Heart right ventricle (tissue), 16 donors: ENCODE measurements at regions of chr7 and their contacts with region 1.

Region 1: GRCh38 chr7:73851410-73852234 is 9.3 kb upstream of the METTL27 start:
- DNase-seq: no peak
- ATAC-seq: peak; percentile 30 to 79 (median 71)
- H3K4me3 ChIP-seq: no peak overlapping the region
- H3K27ac ChIP-seq: peak overlapping the region in 9 of 10 donors; percentile 38 to 81 (median 51)
- H3K4me1 ChIP-seq: peaks cover 0 to 32% (median 13%) of the 10 kb centered on the region in 9 donors
- H3K27me3 ChIP-seq: peaks cover 0 to 25% (median 16%) of the 10 kb centered on the region in 7 donors
- CTCF ChIP-seq: no peak

Region 2: DNA sequence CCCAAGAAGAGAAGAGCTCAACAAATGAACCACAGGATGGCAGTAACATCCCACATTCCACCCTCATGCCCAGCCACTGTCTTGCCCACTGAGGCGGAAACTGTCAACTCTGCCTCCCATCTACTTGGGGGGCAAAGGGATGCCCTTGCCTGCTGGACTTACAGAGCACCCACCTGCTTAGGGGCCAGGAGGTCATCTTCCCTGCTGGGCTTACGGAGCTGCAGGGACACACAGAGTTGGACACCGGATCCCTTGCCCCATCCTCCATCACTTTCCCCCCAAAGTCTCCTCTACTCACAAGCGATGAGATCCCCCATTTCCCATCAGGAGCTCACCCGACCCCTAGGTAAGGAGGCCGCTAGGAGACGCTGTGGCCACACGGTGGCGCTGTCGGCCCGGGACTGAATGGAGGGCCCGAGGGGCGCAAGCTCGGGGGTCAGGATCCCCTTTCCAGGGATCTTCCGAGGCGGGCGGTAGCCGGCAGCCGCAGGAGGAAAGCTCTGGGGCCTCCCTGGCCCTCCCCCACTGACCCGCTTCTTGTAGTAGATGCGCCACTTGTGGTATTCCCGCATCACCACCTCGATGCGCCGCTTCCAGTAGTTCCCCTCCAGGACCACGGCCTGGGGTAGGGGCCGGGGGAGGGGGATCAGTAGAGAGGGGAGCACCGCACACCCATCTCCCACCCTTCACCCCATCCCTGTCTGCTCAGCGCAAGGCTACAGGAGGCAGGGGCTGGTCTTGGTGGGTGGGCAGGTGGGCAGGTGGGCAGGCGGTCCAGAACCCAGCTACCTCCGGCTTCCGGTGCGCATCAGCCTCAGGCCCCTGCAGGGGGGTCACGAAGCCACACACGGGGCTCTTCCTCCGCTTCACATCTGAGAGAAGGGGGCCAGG is 244.6 kb before region 1 on chr7:
- intact Hi-C with region 1: loop called in 7 of 10 experiments (anchors 5 to 10 kb)
- DNase-seq: peak; percentile 32 to 65
- ATAC-seq: peak; percentile 61 to 85 (median 74)
- H3K4me3 ChIP-seq: no peak overlapping the region
- H3K27ac ChIP-seq: no peak overlapping the region
- H3K4me1 ChIP-seq: peaks cover 0 to 7% (median 0%) of the 10 kb centered on the region in 9 donors
- H3K27me3 ChIP-seq: peaks cover 5 to 63% (median 47%) of the 10 kb centered on the region in 7 donors
- CTCF ChIP-seq: peak; percentile 89 to 98 (median 93)

Region 3: DNA sequence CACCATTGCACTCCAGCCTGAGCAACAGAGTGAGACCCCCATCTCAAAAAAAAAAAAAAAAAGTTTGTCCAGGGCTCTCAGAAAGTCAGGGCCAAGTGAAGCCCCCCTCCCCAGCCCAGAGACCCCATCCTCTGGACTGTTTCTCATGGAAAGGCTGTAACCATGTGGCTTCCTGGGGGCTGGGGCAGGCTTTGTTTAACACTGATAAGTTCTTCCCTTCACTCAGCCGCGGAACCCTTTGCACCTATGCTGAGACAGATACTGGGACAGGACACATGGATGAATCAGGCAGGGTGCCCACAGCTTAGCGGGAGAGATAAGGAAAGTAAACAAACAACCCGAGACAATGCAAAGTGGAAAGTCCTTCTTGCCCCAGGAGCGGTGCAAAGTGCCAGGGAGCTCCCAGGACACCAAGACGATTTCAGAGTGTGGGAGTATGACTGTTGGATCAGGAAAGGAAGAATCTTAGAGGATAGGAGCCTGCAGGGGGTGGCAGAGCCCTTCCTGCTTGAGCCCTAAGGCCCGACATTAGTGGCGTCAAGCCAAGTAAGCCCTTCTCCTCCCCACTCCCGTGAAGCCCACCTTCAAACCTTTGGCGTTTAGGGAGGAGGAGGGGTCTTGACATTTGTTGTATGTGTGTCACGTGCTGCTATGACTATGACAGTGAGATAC is 238.9 kb before region 1 on chr7:
- intact Hi-C with region 1: loop called in 7 of 10 experiments (anchors 5 to 10 kb)
- DNase-seq: no peak
- ATAC-seq: peak in 2 of 8 donors; percentile 18 to 40
- H3K4me3 ChIP-seq: no peak overlapping the region
- H3K27ac ChIP-seq: no peak overlapping the region
- H3K4me1 ChIP-seq: peaks cover 0 to 3% (median 0%) of the 10 kb centered on the region in 9 donors
- H3K27me3 ChIP-seq: peaks cover 0 to 52% (median 26%) of the 10 kb centered on the region in 7 donors
- CTCF ChIP-seq: no peak

Region 4: DNA sequence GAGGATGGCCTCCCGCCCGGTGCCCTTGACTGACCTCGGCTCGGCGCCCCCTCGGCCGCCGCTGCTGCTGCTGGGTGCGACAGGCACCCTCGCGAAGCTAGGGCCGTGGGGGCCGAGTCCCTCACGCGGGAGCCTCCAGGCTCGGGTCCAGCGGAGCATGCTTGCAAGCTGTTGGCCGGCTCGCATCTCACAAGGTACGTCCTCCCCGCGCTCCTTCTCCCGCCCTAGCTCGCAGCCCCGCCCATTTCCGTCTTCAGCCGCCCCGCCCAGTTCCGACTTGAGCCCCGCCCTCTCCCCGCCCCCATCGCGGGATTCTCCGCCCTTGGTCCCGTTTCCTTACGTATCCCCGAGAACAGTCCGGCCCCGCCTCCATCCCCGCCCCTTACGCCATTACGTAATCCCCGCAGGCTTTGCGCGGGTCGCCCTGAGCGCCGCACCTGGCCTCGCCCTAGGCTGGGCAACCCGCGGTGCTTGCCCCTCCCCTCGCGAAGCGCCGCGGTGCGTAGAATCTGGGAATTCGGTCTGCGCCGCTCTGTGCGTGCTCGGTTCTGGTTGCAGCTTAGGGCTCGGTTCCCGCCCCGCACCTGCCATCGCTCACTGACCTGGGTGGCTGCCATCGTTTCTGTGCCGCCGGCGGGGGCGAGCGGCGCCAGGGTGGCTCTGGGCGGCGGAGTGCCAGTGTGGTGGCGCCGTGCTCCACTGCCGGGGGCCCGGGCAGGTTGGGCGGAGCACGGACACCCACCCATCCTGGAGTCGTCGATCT is 112.8 kb before region 1 on chr7 and contains the start of gene ABHD11:
- intact Hi-C with region 1: loop called in 5 of 10 experiments (anchors 10 kb)
- DNase-seq: peak; percentile 97 to 99
- ATAC-seq: peak; percentile 92 to 98 (median 96)
- H3K4me3 ChIP-seq: peak within 1 kb of the TSS; percentile 76 to 95 (median 89)
- H3K27ac ChIP-seq: peak within 1 kb of the TSS; percentile 14 to 89 (median 86)
- H3K4me1 ChIP-seq: peaks cover 6 to 29% (median 19%) of the 10 kb centered on the region in 9 donors
- H3K27me3 ChIP-seq: no peaks in the 10 kb centered on the region
- CTCF ChIP-seq: no peak
- total RNA-seq, gene ABHD11: 20.0 to 36.8 (median 29.6) TPM

Region 5: DNA sequence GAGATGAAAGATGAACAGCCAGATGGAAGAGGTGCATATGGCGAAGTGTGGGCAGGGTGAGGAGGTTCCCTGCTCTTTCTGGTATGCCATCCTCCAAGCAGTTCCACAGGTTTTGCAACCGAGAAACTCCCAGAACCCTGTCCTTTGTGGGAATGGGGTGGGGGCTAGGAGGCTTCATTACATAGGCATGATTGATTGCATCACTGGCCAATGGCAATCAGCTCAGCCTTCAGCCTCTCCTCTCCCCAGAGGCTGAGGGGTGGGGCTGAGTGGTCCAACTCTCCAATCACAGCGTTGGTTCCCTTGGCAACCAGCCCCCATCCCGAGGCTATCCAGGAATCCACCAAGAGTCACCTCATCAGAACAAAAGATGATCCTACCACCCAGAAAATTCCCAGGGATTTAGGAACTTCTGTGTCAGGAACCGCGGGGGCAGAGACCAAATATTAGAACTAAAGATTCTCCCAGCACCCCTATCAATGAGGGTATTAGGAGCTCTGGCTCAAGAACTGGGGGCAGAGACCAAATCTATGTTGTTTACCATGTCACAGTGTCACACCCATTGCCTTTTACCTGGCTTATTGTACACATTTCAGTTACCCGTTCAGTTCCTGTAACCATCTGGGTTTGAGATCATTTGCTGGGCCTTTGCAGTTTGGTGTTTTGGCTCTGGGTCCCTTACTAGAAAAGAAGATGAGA is 58.9 kb before region 1 on chr7:
- intact Hi-C with region 1: loop called in 1 of 10 experiments (anchors 10 kb)
- DNase-seq: no peak
- ATAC-seq: no peak
- H3K4me3 ChIP-seq: no peak overlapping the region
- H3K27ac ChIP-seq: no peak overlapping the region
- H3K4me1 ChIP-seq: no peaks in the 10 kb centered on the region
- H3K27me3 ChIP-seq: peaks cover 0 to 20% (median 0%) of the 10 kb centered on the region in 7 donors
- CTCF ChIP-seq: no peak

Region 6: GRCh38 chr7:73811760-73812168 is 39.9 kb before region 1 on chr7:
- intact Hi-C with region 1: loop called in 8 of 10 experiments (anchors 1 to 5 kb)
- DNase-seq: peak; percentile 36 to 68
- ATAC-seq: peak; percentile 68 to 87 (median 82)
- H3K4me3 ChIP-seq: no peak overlapping the region
- H3K27ac ChIP-seq: no peak overlapping the region
- H3K4me1 ChIP-seq: no peaks in the 10 kb centered on the region
- H3K27me3 ChIP-seq: peaks cover 0 to 26% (median 15%) of the 10 kb centered on the region in 7 donors
- CTCF ChIP-seq: peak; percentile 62 to 87 (median 77)

Region 7: DNA sequence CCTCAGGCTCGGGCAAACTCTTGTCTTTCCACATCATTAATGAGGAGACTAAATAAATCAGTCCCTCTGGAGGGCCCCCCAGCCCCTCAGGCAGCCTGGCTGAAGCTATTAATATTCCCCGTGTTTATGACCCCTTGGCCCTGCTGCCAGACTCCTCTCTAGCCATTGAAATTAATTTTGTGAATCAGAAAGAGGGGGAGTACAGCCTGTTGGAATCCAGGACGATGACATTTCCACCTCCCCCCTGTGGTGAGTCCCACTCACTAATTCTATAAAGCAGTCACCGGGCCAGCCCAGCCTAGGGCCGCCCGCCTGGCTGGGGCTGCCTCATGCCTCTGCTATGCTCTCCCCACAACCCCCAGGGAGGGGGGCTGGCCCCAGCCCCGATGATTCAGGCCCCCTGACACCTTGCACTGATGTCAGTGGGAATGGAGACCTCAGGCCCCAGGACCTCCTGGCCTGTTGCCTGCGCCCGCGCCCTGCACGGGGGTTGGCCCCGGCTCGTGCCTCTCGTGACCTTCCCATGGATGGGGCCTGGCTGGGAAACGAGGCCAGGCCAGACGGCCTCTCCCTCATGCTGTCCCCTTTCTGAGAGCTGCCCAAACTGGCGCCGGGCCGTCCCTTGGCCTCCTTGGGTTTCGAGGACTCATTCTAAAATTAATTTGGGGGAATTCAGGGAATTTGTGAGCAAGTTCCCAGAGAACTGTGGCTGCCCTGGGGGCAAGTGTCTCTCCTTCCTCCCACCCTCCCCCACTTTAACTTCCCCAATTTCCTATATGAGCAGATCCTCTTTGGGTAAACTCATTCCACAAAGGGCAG is 43.3 kb after region 1 on chr7:
- intact Hi-C with region 1: no loop called
- DNase-seq: peak; percentile 71 to 86
- ATAC-seq: peak; percentile 61 to 80 (median 78)
- H3K4me3 ChIP-seq: no peak overlapping the region
- H3K27ac ChIP-seq: peak overlapping the region in 8 of 10 donors; percentile 10 to 74 (median 62)
- H3K4me1 ChIP-seq: peaks cover 0 to 54% (median 15%) of the 10 kb centered on the region in 9 donors
- H3K27me3 ChIP-seq: no peaks in the 10 kb centered on the region
- CTCF ChIP-seq: peak in 1 of 9 donors; percentile 6

Region 8: DNA sequence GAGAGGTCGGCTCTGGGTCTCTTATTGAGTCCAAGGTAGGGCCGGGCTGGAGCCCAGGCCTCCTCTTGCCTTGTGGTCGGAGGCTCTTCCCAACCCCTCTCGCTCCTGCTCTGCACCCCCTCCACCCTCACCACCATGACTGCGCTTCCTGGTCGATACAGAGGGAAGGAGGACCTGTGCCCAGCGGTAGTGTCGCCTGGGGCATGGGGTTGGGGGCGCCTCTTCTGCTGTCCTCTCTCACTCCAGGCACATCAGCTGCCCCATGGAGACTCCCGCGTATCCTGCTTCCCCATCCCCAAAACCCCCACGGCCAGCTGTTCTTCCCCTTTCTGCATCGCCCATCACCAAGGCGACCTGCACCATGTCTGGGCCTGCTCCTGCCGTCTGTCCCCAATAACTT is 53.7 kb after region 1 on chr7:
- intact Hi-C with region 1: no loop called
- DNase-seq: no peak
- ATAC-seq: no peak
- H3K4me3 ChIP-seq: no peak overlapping the region
- H3K27ac ChIP-seq: no peak overlapping the region
- H3K4me1 ChIP-seq: peaks cover 0 to 10% (median 4%) of the 10 kb centered on the region in 9 donors
- H3K27me3 ChIP-seq: peaks cover 0 to 5% (median 0%) of the 10 kb centered on the region in 7 donors
- CTCF ChIP-seq: no peak